ENCODE measurements at regions of chr10 and their contacts with region 1.

Region 1: DNA sequence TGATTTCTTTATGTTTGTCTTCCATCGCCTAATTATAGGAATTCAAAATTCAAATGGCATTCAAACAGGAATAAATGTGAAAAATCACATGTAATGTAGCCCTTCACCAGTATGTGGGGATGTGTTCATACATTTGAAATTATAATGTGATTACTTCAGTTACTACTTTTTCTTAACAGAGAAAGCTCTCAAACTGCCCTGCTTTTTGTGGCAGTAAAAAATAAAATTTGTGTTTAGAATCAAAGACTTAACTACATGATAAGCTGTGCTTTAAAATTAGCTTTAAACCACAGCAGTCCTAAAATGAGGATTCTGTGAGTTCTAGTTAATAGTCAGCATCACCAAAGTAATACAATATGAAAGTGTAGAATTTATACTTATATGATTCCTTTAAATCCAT is 7.8 kb upstream of the HERC4 start:
- DNase-seq: no peak
- ATAC-seq: peak; percentile 61
- H3K4me3 ChIP-seq: no peak overlapping the region
- H3K27ac ChIP-seq: peak overlapping the region; percentile 100
- H3K4me1 ChIP-seq: peaks cover 73% of the 10 kb centered on the region
- H3K27me3 ChIP-seq: no peaks in the 10 kb centered on the region
- CTCF ChIP-seq: peak; percentile 75; the same call in 1 of the 2 replicates

Region 2: GRCh38 chr10:68001539-68001938 is 81.3 kb before region 1 on chr10:
- CTCF ChIA-PET with region 1: no interaction called
- POLR2A ChIA-PET with region 1: no interaction called
- in situ Hi-C with region 1: no loop called
- intact Hi-C with region 1: no loop called
- DNase-seq: no peak
- ATAC-seq: no peak
- H3K4me3 ChIP-seq: no peak overlapping the region
- H3K27ac ChIP-seq: no peak overlapping the region
- H3K4me1 ChIP-seq: no peaks in the 10 kb centered on the region
- H3K27me3 ChIP-seq: no peaks in the 10 kb centered on the region
- CTCF ChIP-seq: no peak

Region 3: GRCh38 chr10:68156373-68157185 is 73.7 kb after region 1 on chr10:
- CTCF ChIA-PET with region 1: interaction called, 47 read pairs
- POLR2A ChIA-PET with region 1: no interaction called
- in situ Hi-C with region 1: no loop called
- intact Hi-C with region 1: loop called (anchors 1 kb)
- DNase-seq: peak; percentile 59
- ATAC-seq: no peak
- H3K4me3 ChIP-seq: no peak overlapping the region
- H3K27ac ChIP-seq: peak overlapping the region; percentile 99
- H3K4me1 ChIP-seq: peaks cover 63% of the 10 kb centered on the region
- H3K27me3 ChIP-seq: no peaks in the 10 kb centered on the region
- CTCF ChIP-seq: peak; percentile 88

Region 4: GRCh38 chr10:68301790-68302502 is 219.1 kb after region 1 on chr10:
- CTCF ChIA-PET with region 1: interaction called, 4 read pairs
- POLR2A ChIA-PET with region 1: interaction called, 3 read pairs
- in situ Hi-C with region 1: no loop called
- intact Hi-C with region 1: loop called (anchors 10 kb)
- DNase-seq: peak; percentile 72
- ATAC-seq: peak; percentile 90
- H3K4me3 ChIP-seq: no peak overlapping the region
- H3K27ac ChIP-seq: no peak overlapping the region
- H3K4me1 ChIP-seq: peaks cover 13% of the 10 kb centered on the region; the same call in 1 of the 2 replicates
- H3K27me3 ChIP-seq: no peaks in the 10 kb centered on the region
- CTCF ChIP-seq: peak; percentile 73

Region 5: DNA sequence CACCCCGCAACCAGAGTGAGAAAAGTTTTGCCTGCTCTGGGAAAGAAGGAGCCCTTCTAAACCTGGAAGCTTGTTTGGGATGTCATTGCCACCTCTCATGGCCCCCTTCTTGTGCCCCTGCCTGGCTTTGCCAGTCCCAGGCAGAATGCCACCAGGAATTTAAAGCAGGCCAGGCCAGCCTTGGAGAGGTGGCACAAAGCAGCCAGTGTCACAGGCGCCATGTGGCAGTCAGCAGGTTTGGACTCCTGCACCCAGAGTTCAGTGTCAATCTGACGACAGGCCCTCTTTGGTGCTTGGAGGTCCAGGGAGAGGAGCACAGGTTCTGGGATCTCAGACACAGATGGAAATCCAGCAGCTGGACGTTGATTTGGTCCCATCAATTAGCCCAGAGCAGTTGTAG is 1208.1 kb after region 1 on chr10:
- CTCF ChIA-PET with region 1: no interaction called
- POLR2A ChIA-PET with region 1: no interaction called
- in situ Hi-C with region 1: no loop called
- intact Hi-C with region 1: no loop called
- DNase-seq: no peak
- ATAC-seq: no peak
- H3K4me3 ChIP-seq: no peak overlapping the region
- H3K27ac ChIP-seq: no peak overlapping the region
- H3K4me1 ChIP-seq: no peaks in the 10 kb centered on the region
- H3K27me3 ChIP-seq: no peaks in the 10 kb centered on the region
- CTCF ChIP-seq: no peak

Measured in Panc1 (cell line).